Sciatic nerve (tissue), 2 donors: ENCODE measurements at regions of chr3 and their contacts with region 1.

Region 1: GRCh38 chr3:169982812-169983211 is 16.2 kb downstream of the SEC62 start:
- DNase-seq: no peak
- ATAC-seq: no peak

Region 2: GRCh38 chr3:169998568-169999131 is 15.8 kb after region 1 on chr3:
- intact Hi-C with region 1: loop called (anchors 1 kb)
- DNase-seq: no peak
- ATAC-seq: no peak